ENCODE measurements at regions of chr2 and their contacts with region 1.

Region 1: DNA sequence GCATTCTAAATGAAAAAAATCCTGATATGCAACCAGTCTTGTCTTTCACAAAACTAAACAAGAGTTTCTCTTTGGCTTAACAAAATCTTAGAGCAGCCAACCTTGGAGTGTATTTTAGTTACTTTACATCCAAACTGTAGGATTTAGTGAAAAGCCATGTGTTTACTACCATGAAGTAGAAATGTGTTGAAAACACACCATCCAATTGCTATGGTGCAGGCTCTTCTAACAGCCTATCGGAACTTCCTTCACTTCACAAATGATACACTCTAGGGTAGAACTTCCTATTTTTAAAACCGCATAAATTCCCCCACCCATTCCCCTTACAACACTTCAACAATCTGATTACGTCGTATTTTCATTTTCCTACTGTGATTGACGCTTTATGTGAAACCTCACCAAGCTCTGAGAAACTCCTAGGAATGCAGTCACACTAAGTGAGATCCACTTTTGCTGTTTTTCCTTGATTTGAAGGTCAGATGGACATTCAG is 74.4 kb upstream of the MAP4K4 start:
- DNase-seq: peak; percentile 86 to 95 (median 94)
- H3K4me3 ChIP-seq: peak overlapping the region in 1 of 3 experiments; percentile 37
- H3K4me3 Mint-ChIP-seq: peak overlapping the region in 1 of 2 donors; percentile 79
- H3K27ac ChIP-seq: peak overlapping the region in 1 of 2 donors; percentile 73
- H3K27ac Mint-ChIP-seq: peak overlapping the region; percentile 72 to 96 (median 89)
- H3K4me1 ChIP-seq: peaks cover 87% of the 10 kb centered on the region in 2 donors
- H3K4me1 Mint-ChIP-seq: peaks cover 84% of the 10 kb centered on the region
- H3K27me3 ChIP-seq: no peaks in the 10 kb centered on the region
- H3K27me3 Mint-ChIP-seq: peaks cover 16 to 23% (median 21%) of the 10 kb centered on the region in 3 donors
- CTCF ChIP-seq: no peak

Region 2: DNA sequence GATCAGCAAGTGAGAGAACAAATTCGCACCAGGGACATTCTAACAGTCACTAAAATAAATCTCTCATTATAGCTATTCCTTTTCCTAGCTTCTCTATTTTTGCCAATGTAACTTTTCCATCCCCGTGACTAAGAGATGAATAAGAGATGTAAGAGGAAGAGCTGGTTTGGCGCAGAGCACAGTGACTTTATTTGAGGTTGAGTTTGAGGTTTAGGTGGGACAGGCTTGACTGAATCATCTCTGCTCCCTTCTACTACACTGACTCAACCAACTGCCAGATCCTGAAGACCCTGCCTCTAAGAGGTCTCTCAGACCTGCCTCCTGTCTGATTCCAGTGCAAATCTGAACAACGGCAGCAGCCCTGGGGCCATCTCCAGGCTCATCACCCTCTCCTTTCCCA is 176.2 kb before region 1 on chr2:
- intact Hi-C with region 1: loop called in 1 of 2 experiments (anchors 10 kb)
- DNase-seq: peak; percentile 82 to 94 (median 88)
- H3K4me3 ChIP-seq: no peak overlapping the region
- H3K4me3 Mint-ChIP-seq: peak overlapping the region in 1 of 2 donors; percentile 72
- H3K27ac ChIP-seq: no peak overlapping the region
- H3K27ac Mint-ChIP-seq: peak overlapping the region; percentile 8 to 87 (median 64)
- H3K4me1 ChIP-seq: peaks cover 20 to 25% of the 10 kb centered on the region in 2 donors
- H3K4me1 Mint-ChIP-seq: peaks cover 31% of the 10 kb centered on the region
- H3K27me3 ChIP-seq: peaks cover 3 to 19% of the 10 kb centered on the region in 2 donors
- H3K27me3 Mint-ChIP-seq: peaks cover 24 to 44% (median 42%) of the 10 kb centered on the region in 3 donors
- CTCF ChIP-seq: no peak

Measured in CD14-positive monocyte (primary cell).